ENCODE measurements at regions of chr10 and their contacts with region 1.

Region 1: GRCh38 chr10:4051011-4051640 is 266.1 kb upstream of the KLF6 start:
- DNase-seq: no peak
- ATAC-seq: no peak
- H3K4me3 Mint-ChIP-seq: peak overlapping the region; percentile 78
- H3K27ac Mint-ChIP-seq: peak overlapping the region; percentile 79
- H3K4me1 Mint-ChIP-seq: peaks cover 36% of the 10 kb centered on the region
- H3K27me3 Mint-ChIP-seq: no peaks in the 10 kb centered on the region
- CTCF ChIP-seq: no peak

Region 2: GRCh38 chr10:4101918-4102654 is 51.0 kb after region 1 on chr10:
- CTCF ChIA-PET with region 1: no interaction called
- POLR2A ChIA-PET with region 1: no interaction called
- intact Hi-C with region 1: no loop called
- DNase-seq: no peak
- ATAC-seq: no peak
- H3K4me3 Mint-ChIP-seq: no peak overlapping the region
- H3K27ac Mint-ChIP-seq: no peak overlapping the region
- H3K4me1 Mint-ChIP-seq: peaks cover 10% of the 10 kb centered on the region
- H3K27me3 Mint-ChIP-seq: no peaks in the 10 kb centered on the region
- CTCF ChIP-seq: no peak

Region 3: GRCh38 chr10:4121502-4122380 is 70.6 kb after region 1 on chr10:
- CTCF ChIA-PET with region 1: no interaction called
- POLR2A ChIA-PET with region 1: no interaction called
- intact Hi-C with region 1: loop called (anchors 5 kb)
- DNase-seq: peak; percentile 30
- ATAC-seq: peak; percentile 72
- H3K4me3 Mint-ChIP-seq: peak overlapping the region; percentile 76
- H3K27ac Mint-ChIP-seq: peak overlapping the region; percentile 74
- H3K4me1 Mint-ChIP-seq: peaks cover 37% of the 10 kb centered on the region
- H3K27me3 Mint-ChIP-seq: no peaks in the 10 kb centered on the region
- CTCF ChIP-seq: no peak

Measured in activated B cell treated with CpG ODN at 0.5 μM for 24 hours (primary cell).